ENCODE measurements at regions of chr1 and their contacts with region 1.

Region 1: GRCh38 chr1:175154629-175155472 is 37.7 kb downstream of the KIAA0040 start:
- DNase-seq: peak; percentile 83
- ATAC-seq: peak; percentile 64
- H3K4me3 Mint-ChIP-seq: no peak overlapping the region
- H3K27ac Mint-ChIP-seq: no peak overlapping the region
- H3K4me1 Mint-ChIP-seq: peaks cover 11% of the 10 kb centered on the region
- H3K27me3 Mint-ChIP-seq: peaks cover 35% of the 10 kb centered on the region

Region 2: DNA sequence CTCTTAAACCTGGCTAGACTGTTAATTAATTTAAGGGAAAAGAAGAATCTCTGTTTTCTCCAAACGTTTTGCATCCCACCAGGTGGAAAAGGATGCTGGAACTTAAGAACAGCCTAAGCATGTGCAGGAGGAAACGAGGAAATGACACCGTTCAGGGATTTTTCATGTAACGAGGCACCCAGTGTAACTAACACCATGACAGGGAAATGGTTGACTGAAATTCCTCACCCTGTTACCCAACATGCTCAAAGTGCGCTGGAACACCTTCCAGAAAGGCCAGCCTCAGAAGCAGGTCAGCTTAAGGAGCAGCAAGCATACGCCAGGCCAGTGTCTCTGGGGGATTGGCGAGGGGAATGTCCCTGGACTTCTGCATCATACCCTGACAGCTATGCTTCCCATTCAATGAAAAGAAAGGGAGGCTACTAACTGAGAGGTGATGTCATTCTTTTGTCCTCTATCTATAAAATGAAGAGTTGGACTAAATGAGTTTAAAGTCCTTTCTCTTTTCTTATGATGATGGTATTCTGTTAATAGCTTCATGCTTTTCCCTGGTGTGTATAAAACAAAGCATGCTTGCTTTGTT is 65.6 kb before region 1 on chr1:
- CTCF ChIA-PET with region 1: no interaction called
- DNase-seq: no peak
- ATAC-seq: no peak
- H3K4me3 Mint-ChIP-seq: no peak overlapping the region
- H3K27ac Mint-ChIP-seq: no peak overlapping the region
- H3K4me1 Mint-ChIP-seq: no peaks in the 10 kb centered on the region
- H3K27me3 Mint-ChIP-seq: peaks cover 17% of the 10 kb centered on the region

Region 3: DNA sequence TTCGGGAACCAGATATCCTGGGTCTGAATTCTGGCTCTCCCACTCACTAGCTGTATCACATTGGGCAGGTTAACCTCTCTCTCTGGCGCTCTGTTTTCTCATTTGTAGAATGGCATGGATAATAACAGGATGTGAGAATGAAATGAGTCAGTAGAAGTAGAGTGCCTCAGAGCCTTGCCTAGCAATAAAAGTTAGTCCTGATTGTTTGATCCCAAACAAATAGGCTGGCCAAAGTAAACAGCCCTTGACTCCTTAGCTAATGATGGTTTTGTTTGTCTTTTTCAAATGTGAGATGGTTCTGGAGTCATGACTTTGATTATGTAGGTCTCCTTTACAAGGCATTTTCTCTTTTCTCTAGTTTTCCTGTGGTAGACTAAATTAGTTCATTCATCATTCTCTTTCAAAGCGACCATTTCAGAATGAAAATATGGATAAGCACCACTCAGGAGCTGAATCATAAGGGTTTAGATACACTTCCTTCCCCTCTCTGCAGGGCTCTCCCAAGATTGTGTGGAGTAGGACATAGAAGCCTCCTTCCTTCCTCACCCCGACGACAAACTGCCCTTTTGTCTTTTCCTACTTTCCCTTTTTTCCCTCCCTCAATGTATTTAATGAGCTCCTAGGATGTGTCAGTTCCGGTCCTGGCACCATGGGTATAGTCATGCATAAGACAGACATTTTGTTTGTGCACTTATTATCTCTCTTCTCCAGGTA is 14.6 kb after region 1 on chr1:
- CTCF ChIA-PET with region 1: interaction called, 20 read pairs
- DNase-seq: no peak
- ATAC-seq: no peak
- H3K4me3 Mint-ChIP-seq: no peak overlapping the region
- H3K27ac Mint-ChIP-seq: peak overlapping the region; percentile 15
- H3K4me1 Mint-ChIP-seq: peaks cover 39% of the 10 kb centered on the region
- H3K27me3 Mint-ChIP-seq: no peaks in the 10 kb centered on the region

Region 4: DNA sequence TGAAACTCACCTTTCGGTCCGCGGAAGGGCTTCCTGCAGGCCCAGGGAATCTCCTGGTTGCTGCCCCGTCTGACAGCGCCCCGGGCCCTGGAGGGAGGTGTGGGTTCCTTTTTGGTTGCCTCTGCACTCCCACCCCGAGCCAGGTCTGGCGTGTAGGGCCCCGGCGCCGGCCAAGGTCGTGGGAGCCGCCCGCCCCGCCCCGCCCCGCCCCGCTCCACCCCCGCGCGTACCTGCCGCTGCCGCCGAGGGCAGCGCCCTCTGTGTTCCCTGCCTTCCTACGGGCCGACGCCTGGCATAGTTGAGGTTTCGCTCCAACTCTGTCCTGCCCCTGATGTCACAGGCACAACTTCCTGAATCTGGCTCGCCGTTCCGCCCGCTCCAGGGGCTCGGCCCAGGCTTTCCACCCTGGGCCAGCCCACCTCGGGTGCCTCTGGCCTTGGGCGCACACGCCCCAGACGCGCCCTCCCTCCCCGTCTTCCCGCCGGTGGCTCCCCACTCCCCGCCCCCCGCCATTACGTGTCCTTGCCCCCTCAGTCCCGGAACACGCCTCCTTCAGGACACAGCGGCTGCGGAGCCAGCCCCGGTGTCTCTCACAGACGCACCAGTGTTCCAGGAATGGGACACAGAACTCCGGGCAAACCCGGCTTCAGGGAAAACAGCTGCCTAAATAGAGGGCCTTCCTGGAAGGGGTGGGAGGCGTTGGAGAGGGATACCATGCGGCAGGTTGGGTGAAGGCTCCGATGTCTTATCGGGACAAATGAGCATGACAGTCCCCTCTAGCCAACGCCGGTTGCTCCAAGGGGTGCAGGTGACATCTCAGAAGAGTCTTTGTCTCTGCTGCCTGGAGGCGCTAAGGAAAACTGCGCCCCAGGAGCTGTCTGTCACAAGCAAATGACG is 38.0 kb after region 1 on chr1 and contains the start of gene KIAA0040:
- CTCF ChIA-PET with region 1: interaction called, 41 read pairs
- DNase-seq: peak; percentile 73
- ATAC-seq: peak; percentile 73
- H3K4me3 Mint-ChIP-seq: peak within 1 kb of the TSS; percentile 95
- H3K27ac Mint-ChIP-seq: peak within 1 kb of the TSS; percentile 86
- H3K4me1 Mint-ChIP-seq: peaks cover 49% of the 10 kb centered on the region
- H3K27me3 Mint-ChIP-seq: no peaks in the 10 kb centered on the region
- total RNA-seq, gene KIAA0040: 54.8 to 64.3 TPM

Region 5: DNA sequence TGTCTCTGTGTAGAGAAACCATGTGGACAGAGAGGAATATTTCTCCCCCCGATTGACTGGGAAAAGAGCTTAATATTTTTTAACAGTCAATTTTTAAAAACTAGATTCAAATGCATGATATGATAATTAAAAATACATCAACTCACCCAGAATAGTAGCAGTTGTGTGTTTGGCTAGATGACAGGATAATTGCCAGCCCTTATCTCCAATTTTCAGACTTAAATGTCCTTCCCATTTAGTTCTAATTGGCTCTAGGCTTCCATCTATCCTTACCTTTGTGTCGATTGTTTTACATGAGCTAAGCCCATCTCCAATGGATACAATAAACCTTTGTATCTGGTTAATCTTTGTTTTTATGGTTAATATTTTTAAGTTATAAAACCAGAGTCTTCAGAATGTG is 61.6 kb after region 1 on chr1:
- CTCF ChIA-PET with region 1: interaction called, 11 read pairs
- DNase-seq: no peak
- ATAC-seq: no peak
- H3K4me3 Mint-ChIP-seq: no peak overlapping the region
- H3K27ac Mint-ChIP-seq: no peak overlapping the region
- H3K4me1 Mint-ChIP-seq: peaks cover 10% of the 10 kb centered on the region
- H3K27me3 Mint-ChIP-seq: no peaks in the 10 kb centered on the region

Region 6: GRCh38 chr1:175331891-175332290 is 177.0 kb after region 1 on chr1:
- CTCF ChIA-PET with region 1: interaction called, 11 read pairs
- DNase-seq: no peak
- ATAC-seq: no peak
- H3K4me3 Mint-ChIP-seq: no peak overlapping the region
- H3K27ac Mint-ChIP-seq: no peak overlapping the region
- H3K4me1 Mint-ChIP-seq: no peaks in the 10 kb centered on the region
- H3K27me3 Mint-ChIP-seq: peaks cover 12% of the 10 kb centered on the region